A549 (cell line): ENCODE measurements at regions of chr1 and their contacts with region 1.

Region 1: GRCh38 chr1:152495066-152495675 is 15.4 kb upstream of the LCE5A start:
- DNase-seq: peak in 1 of 2 experiments; percentile 30
- ATAC-seq: no peak
- H3K4me3 ChIP-seq: no peak overlapping the region
- H3K27ac ChIP-seq: no peak overlapping the region
- H3K4me1 ChIP-seq: peaks cover 16% of the 10 kb centered on the region
- CTCF ChIP-seq: no peak
- EP300 ChIP-seq: no peak
- POLR2A ChIP-seq: no peak
- RAD21 ChIP-seq: 0 out of 5 replicates have a peak, but pooled peaks of 1 of the 2 experiments have one; percentile 11

Region 2: DNA sequence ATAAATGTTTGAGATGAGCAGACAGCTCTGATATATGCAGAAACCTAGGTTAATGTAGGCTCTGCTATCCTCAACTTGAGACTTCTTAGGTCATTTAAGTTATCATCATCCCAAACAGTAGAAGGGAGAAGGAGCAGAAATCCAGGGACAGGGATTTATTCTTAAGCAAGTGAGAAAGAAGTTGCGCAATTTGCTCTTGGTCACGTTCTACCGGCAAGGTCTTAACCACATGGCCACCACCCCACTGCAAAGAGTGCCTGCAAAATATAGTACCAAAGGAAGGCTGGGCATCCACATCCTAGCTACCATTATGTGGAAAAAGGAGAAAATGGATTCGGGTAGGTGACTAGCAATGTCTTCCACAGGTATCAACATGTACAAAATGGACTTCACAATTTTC is 106.3 kb before region 1 on chr1:
- CTCF ChIA-PET with region 1: no interaction called
- POLR2A ChIA-PET with region 1: no interaction called
- DNase-seq: no peak
- ATAC-seq: no peak
- H3K4me3 ChIP-seq: no peak overlapping the region
- H3K27ac ChIP-seq: no peak overlapping the region
- H3K4me1 ChIP-seq: no peaks in the 10 kb centered on the region
- CTCF ChIP-seq: no peak
- EP300 ChIP-seq: no peak
- POLR2A ChIP-seq: no peak
- RAD21 ChIP-seq: no peak

Region 3: GRCh38 chr1:152479792-152480595 is 15.2 kb before region 1 on chr1:
- CTCF ChIA-PET with region 1: interaction called, 37 read pairs
- POLR2A ChIA-PET with region 1: no interaction called
- DNase-seq: peak; percentile 61 to 83
- ATAC-seq: peak; percentile 92 to 99
- H3K4me3 ChIP-seq: no peak overlapping the region
- H3K27ac ChIP-seq: no peak overlapping the region
- H3K4me1 ChIP-seq: no peaks in the 10 kb centered on the region
- CTCF ChIP-seq: peak; percentile 42
- EP300 ChIP-seq: no peak
- POLR2A ChIP-seq: no peak
- RAD21 ChIP-seq: peak in 1 of 2 experiments; percentile 18; a peak in 1 of 5 replicates

Region 4: GRCh38 chr1:152517237-152517811 is 22.2 kb after region 1 on chr1:
- CTCF ChIA-PET with region 1: interaction called, 16 read pairs
- POLR2A ChIA-PET with region 1: no interaction called
- DNase-seq: peak; percentile 64 to 91
- ATAC-seq: peak; percentile 90 to 92
- H3K4me3 ChIP-seq: no peak overlapping the region
- H3K27ac ChIP-seq: peak overlapping the region; percentile 75 to 88
- H3K4me1 ChIP-seq: peaks cover 35% of the 10 kb centered on the region
- CTCF ChIP-seq: no peak
- EP300 ChIP-seq: peak in 1 of 2 experiments; percentile 69; a peak in 1 of 5 replicates
- POLR2A ChIP-seq: no peak
- RAD21 ChIP-seq: peak; percentile 6 to 21; a peak in 2 of 5 replicates

Region 5: GRCh38 chr1:152725261-152725660 is 230.1 kb after region 1 on chr1:
- CTCF ChIA-PET with region 1: no interaction called
- POLR2A ChIA-PET with region 1: no interaction called
- DNase-seq: no peak
- ATAC-seq: no peak
- H3K4me3 ChIP-seq: no peak overlapping the region
- H3K27ac ChIP-seq: no peak overlapping the region
- H3K4me1 ChIP-seq: no peaks in the 10 kb centered on the region
- CTCF ChIP-seq: no peak
- EP300 ChIP-seq: no peak
- POLR2A ChIP-seq: no peak
- RAD21 ChIP-seq: no peak